Esophagus muscularis mucosa (tissue), 4 donors: ENCODE measurements at regions of chr14 and their contacts with region 1.

Region 1: GRCh38 chr14:77067632-77068514 is 30.2 kb upstream of the CIPC start:
- DNase-seq: no peak
- H3K4me3 ChIP-seq: no peak overlapping the region
- H3K27ac ChIP-seq: no peak overlapping the region
- H3K4me1 ChIP-seq: peaks cover 21 to 42% (median 28%) of the 10 kb centered on the region in 4 donors
- H3K27me3 ChIP-seq: no peaks in the 10 kb centered on the region
- CTCF ChIP-seq: peak; percentile 84 to 92 (median 91)
- EP300 ChIP-seq: no peak
- POLR2A ChIP-seq: no peak

Region 2: DNA sequence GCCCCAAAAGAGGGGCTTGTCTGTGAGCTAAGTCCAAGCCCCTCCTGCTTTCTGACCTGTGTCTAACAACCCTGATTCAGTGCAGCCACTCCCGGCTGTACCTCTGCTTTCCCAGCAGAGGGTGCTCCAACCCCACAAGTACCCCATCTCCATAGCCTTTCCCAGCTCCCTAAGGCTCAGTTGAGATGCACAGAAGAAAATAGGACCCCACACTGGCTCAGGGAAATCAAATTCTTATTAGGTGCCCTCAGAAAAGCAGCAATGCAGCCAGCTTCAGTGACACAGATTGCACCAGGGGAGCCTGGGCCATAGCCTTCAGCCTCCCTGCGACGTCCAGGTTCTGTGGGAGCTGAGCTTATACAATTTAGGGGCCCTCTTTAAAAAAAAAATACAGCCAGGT is 191.8 kb before region 1 on chr14:
- intact Hi-C with region 1: loop called (anchors 1 kb)
- DNase-seq: no peak
- H3K4me3 ChIP-seq: no peak overlapping the region
- H3K27ac ChIP-seq: no peak overlapping the region
- H3K4me1 ChIP-seq: peaks cover 0 to 4% (median 2%) of the 10 kb centered on the region in 4 donors
- H3K27me3 ChIP-seq: no peaks in the 10 kb centered on the region
- CTCF ChIP-seq: peak; percentile 94 to 96 (median 94)
- EP300 ChIP-seq: no peak
- POLR2A ChIP-seq: no peak

Region 3: GRCh38 chr14:76910371-76910890 is 157.4 kb before region 1 on chr14:
- intact Hi-C with region 1: loop called (anchors 5 kb)
- DNase-seq: no peak
- H3K4me3 ChIP-seq: no peak overlapping the region
- H3K27ac ChIP-seq: no peak overlapping the region
- H3K4me1 ChIP-seq: peaks cover 15 to 31% (median 21%) of the 10 kb centered on the region in 4 donors
- H3K27me3 ChIP-seq: no peaks in the 10 kb centered on the region
- CTCF ChIP-seq: no peak
- EP300 ChIP-seq: no peak
- POLR2A ChIP-seq: no peak

Region 4: DNA sequence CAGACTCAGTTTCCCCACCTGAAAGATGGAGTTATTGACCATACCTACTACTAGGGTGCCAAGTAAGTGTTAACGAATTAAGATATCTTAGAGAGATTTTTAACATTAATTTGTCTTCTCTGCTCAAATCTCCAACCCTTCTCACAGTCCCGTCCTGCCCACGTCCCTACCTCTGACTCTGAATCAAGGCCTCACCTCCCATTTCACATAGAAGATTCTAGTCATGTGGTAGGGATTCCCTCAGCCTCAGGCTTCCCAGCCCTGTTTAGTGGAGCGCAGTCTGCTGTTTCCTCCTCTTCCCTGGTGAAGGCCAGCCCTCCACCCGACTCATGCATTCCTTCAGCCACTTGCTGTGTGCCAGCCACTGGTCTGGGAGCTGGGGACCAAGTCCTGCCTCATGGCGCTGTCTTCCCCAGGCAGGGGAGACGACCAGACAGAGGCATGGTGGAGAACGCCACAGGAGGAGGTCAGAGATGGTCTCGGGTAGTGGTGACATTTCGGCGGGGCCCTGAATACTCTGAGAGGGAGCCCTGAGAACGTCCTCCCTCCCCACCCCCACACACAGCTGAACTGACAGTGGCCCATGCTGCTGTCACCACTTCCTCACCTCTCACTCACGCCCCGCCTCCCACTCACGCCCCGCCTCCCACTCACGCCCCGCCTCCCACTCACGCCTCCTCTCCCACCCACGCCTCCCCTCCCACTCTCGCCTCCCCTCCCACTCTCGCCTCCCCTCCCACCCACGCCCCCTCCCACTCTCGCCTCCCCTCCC is 152.6 kb after region 1 on chr14:
- intact Hi-C with region 1: no loop called
- DNase-seq: no peak
- H3K4me3 ChIP-seq: no peak overlapping the region
- H3K27ac ChIP-seq: no peak overlapping the region
- H3K4me1 ChIP-seq: no peaks in the 10 kb centered on the region
- H3K27me3 ChIP-seq: peaks cover 0 to 70% (median 0%) of the 10 kb centered on the region in 4 donors
- CTCF ChIP-seq: no peak
- EP300 ChIP-seq: no peak
- POLR2A ChIP-seq: no peak